ENCODE measurements at regions of chr2 and their contacts with region 1.

Region 1: DNA sequence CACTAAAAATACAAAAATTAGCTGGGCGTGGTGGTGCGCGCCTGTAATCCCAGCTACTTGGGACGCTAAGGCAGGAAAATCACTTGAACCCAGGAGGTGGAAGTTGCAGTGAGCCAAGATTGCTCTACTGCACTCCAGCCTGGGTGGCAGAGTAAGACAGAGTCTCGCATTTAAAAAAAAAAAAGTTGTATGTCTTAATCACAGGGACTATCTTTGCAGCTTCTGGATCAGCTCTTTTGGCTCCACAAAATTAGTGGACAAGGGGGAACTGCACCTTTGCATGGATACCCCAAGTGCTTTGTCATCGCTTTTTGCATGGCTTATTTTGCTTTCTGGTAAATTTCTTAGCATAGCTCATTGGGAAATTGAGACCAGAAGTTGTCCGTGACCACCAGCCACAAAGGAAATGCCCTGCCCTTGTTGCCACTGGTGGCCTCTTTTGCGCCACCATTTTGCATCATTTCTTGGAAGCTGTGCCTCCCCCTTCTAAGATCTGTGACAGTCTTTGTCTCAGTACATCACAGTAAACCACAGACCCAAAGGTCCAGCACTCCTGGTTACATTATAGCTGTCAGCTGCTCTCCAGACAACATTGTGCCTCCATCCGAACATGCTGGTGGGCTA is 43.9 kb upstream of the PCBP1 start:
- DNase-seq: peak; percentile 59
- H3K4me3 Mint-ChIP-seq: peak overlapping the region; percentile 11
- H3K27ac Mint-ChIP-seq: peak overlapping the region; percentile 87
- H3K4me1 Mint-ChIP-seq: peaks cover 49% of the 10 kb centered on the region
- H3K27me3 Mint-ChIP-seq: no peaks in the 10 kb centered on the region

Region 2: GRCh38 chr2:69946351-69947077 is 96.8 kb before region 1 on chr2:
- intact Hi-C with region 1: loop called (anchors 5 kb)
- DNase-seq: peak; percentile 67
- H3K4me3 Mint-ChIP-seq: no peak overlapping the region
- H3K27ac Mint-ChIP-seq: peak overlapping the region; percentile 85
- H3K4me1 Mint-ChIP-seq: peaks cover 44% of the 10 kb centered on the region
- H3K27me3 Mint-ChIP-seq: peaks cover 2% of the 10 kb centered on the region

Region 3: GRCh38 chr2:69985688-69986087 is 57.7 kb before region 1 on chr2:
- intact Hi-C with region 1: no loop called
- DNase-seq: no peak
- H3K4me3 Mint-ChIP-seq: no peak overlapping the region
- H3K27ac Mint-ChIP-seq: no peak overlapping the region
- H3K4me1 Mint-ChIP-seq: peaks cover 3% of the 10 kb centered on the region
- H3K27me3 Mint-ChIP-seq: no peaks in the 10 kb centered on the region

Region 4: DNA sequence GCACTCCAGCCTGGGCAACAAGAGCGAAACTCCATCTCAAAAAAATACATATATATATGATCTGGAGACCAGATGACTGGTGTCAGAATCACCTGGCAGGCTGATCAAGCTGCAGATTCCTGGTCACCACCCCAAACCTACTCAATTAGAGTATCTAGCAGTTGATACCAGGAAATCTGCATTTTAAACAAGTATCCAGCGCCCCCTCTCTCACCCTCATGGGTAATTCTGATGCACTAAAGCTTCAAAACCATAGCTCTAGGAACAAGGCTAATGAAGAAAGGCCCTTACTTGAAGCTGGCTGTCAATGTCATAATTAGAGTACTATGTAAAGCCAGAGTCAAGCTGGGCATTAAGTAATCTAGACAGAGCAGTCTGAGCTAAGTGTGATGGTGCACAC is 18.9 kb after region 1 on chr2:
- intact Hi-C with region 1: no loop called
- DNase-seq: no peak
- H3K4me3 Mint-ChIP-seq: no peak overlapping the region
- H3K27ac Mint-ChIP-seq: no peak overlapping the region
- H3K4me1 Mint-ChIP-seq: peaks cover 10% of the 10 kb centered on the region
- H3K27me3 Mint-ChIP-seq: no peaks in the 10 kb centered on the region

Region 5: GRCh38 chr2:70475266-70475665 is 431.9 kb after region 1 on chr2:
- intact Hi-C with region 1: no loop called
- DNase-seq: no peak
- H3K4me3 Mint-ChIP-seq: no peak overlapping the region
- H3K27ac Mint-ChIP-seq: no peak overlapping the region
- H3K4me1 Mint-ChIP-seq: peaks cover 9% of the 10 kb centered on the region
- H3K27me3 Mint-ChIP-seq: peaks cover 7% of the 10 kb centered on the region